Head of caudate nucleus (tissue), 42 donors: ENCODE measurements at regions of chr2 and their contacts with region 1.

Region 1: GRCh38 chr2:63588385-63589147 is at the starts of genes MDH1 and WDPCP:
- DNase-seq: peak; percentile 86 to 98 (median 95)

Region 2: DNA sequence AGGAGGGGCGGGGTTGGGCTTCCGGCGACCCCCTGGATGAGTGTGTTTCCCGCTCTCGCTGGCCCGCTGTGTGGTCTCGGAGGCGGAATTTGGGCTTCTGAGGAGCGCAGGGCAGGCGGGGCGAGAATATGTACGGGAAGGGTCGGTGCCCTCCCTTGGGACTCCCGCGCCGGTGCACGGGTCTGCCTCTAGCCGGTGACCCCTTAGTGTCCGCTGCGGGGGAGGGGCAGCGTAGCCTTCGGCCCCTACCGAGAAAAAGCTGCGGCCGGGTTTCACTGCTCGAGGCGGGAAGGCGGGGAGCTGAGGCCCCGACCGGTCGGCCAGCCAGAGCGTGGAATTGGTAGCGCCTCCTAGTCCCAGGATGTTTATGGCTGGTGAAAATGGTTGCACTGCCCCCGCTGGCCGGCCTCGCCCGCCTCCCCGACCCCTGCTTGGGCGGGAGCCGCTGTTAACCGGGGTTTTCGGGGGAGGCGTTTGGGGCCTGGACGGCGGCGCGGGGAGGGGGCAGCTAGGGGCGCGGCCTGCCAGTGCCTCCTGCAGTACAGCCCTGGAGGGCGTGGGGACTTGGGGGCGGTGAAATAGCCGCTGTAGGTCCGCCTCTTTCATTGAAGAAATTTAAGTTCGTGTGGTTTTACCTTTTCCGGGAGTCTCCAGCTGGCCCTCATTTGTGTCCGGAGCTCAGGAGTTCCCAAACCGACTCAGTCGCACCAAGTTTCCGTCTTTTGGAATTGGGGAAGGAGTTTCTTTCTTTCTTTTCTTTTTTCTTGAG is 252.9 kb after region 1 on chr2 and contains the start of gene UGP2:
- intact Hi-C with region 1: loop called (anchors 5 kb)
- DNase-seq: peak; percentile 41 to 87 (median 74)